ENCODE measurements at regions of chr17 and their contacts with region 1.

Region 1: GRCh38 chr17:16521070-16521727 is 29.2 kb upstream of the LRRC75A start:
- DNase-seq: peak; percentile 80 to 84
- H3K4me3 ChIP-seq: no peak overlapping the region
- H3K4me1 ChIP-seq: no peaks in the 10 kb centered on the region
- H3K27me3 ChIP-seq: peaks cover 11% of the 10 kb centered on the region

Region 2: GRCh38 chr17:16052486-16052885 is 468.7 kb before region 1 on chr17:
- in situ Hi-C with region 1: loop called (anchors 25 kb)
- DNase-seq: no peak
- H3K4me3 ChIP-seq: no peak overlapping the region
- H3K4me1 ChIP-seq: no peaks in the 10 kb centered on the region
- H3K27me3 ChIP-seq: no peaks in the 10 kb centered on the region

Region 3: DNA sequence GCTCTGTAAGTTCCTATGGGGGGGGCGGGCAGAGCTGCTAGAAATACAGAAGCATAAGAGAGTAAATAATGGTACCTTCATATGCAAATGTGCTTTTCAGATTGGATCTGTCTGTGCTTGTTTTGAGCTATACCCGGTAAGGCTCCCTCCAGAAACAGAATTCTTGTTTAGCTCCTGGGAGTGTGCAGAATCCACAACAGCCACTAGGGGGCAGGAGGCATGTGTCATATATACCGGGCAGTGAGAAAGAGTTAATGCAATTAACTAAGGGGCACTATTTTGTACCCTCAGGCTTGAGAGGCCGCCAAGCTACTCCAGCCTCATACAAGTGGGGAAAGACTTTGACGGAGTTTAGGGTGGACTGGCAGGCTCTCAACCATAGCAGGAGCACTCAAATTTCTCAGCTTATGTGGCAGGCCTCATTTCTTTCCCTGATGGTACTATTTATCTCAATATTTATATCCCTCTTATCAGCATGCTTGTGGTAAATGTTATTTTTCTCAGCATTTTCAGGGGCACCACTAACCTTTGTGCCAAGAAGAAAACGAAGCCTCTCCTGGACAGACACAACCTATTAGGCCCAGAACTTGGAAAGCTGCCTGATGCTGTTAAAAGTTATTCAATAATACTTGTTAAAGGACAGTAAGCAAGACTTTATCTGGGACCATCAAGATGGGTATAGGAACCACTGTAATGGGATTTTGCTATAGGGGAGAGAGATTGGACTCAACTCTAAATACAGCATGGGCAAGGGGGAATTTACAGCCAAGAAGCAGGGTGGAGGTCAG is 157.3 kb before region 1 on chr17:
- in situ Hi-C with region 1: loop called (anchors 10 kb)
- DNase-seq: peak; percentile 92 to 95
- H3K4me3 ChIP-seq: no peak overlapping the region
- H3K4me1 ChIP-seq: peaks cover 6% of the 10 kb centered on the region
- H3K27me3 ChIP-seq: no peaks in the 10 kb centered on the region

Region 4: DNA sequence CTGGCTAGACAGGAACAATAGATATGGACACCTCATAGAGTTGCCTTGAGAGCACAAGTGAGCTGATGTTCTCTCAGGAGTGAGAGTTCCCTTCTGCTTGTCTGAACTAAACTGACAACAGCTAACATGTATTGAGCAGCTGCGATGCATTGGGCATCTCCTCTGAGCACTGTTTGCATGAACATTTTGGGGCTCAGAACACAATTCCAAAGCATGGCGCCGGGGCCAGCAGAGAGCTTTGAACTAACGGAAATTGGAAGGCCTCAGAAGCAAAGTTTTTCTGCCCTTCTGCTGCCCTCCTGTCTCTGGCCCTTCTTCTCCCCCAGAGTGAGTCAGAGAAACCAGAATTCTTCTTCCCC is 67.7 kb before region 1 on chr17:
- in situ Hi-C with region 1: loop called (anchors 5 kb)
- DNase-seq: no peak
- H3K4me3 ChIP-seq: no peak overlapping the region
- H3K4me1 ChIP-seq: no peaks in the 10 kb centered on the region
- H3K27me3 ChIP-seq: no peaks in the 10 kb centered on the region

Region 5: GRCh38 chr17:16623282-16623681 is 102.1 kb after region 1 on chr17:
- in situ Hi-C with region 1: no loop called
- DNase-seq: no peak
- H3K4me3 ChIP-seq: no peak overlapping the region
- H3K4me1 ChIP-seq: no peaks in the 10 kb centered on the region
- H3K27me3 ChIP-seq: no peaks in the 10 kb centered on the region

Measured in HAP-1 (cell line).